ENCODE measurements at regions of chrX and their contacts with region 1.

Region 1: DNA sequence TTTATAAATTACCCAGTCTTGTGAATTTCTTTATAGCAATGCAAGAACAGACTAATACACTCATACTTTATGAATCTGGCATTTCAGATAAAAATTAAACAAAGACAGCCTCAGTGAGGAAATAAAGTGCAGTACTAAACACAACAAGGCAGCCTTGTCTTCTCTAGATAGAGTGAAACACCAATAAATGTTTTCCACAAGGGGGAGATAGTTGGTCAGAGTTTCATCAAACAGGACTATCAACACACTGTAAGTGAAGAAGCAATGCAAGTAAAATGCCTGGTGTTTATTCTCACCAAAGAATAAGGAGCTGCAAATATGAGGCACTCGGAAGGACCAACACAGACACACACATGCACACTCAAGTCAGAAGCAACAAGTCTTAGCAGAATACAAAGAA is 62.8 kb downstream of the FAM9B start:
- DNase-seq: peak in 1 of 2 donors; percentile 68
- ATAC-seq: peak in 2 of 3 donors; percentile 70
- H3K4me3 ChIP-seq: no peak overlapping the region
- H3K4me3 Mint-ChIP-seq: no peak overlapping the region
- H3K27ac ChIP-seq: no peak overlapping the region
- H3K27ac Mint-ChIP-seq: no peak overlapping the region
- H3K4me1 ChIP-seq: no peaks in the 10 kb centered on the region
- H3K4me1 Mint-ChIP-seq: peaks cover 0 to 4% of the 10 kb centered on the region in 2 donors
- H3K27me3 ChIP-seq: no peaks in the 10 kb centered on the region
- H3K27me3 Mint-ChIP-seq: peaks cover 0 to 3% of the 10 kb centered on the region in 2 donors
- CTCF ChIP-seq: peak; percentile 47

Region 2: DNA sequence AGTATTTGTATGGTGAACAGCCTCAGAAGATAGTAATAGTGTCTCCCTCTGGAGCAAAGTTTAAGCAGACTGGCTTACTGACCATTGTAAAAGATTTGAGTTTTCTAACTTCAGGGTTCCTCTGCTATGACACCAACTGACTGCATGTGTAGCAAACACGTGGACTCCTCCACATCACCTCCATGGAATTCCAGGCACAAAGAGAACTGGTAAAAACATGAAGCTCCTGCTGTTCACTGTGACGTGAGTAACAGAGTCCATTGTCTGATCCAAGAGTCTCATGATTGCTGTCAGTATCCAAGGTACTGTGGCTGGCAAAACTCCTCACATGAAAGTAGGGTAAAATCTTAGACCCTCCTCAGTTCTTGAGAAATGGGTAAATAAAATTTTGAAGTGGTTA is 170.4 kb after region 1 on chrX:
- intact Hi-C with region 1: no loop called
- DNase-seq: no peak
- ATAC-seq: no peak
- H3K4me3 ChIP-seq: no peak overlapping the region
- H3K4me3 Mint-ChIP-seq: no peak overlapping the region
- H3K27ac ChIP-seq: no peak overlapping the region
- H3K27ac Mint-ChIP-seq: no peak overlapping the region
- H3K4me1 ChIP-seq: no peaks in the 10 kb centered on the region
- H3K4me1 Mint-ChIP-seq: no peaks in the 10 kb centered on the region
- H3K27me3 ChIP-seq: no peaks in the 10 kb centered on the region
- H3K27me3 Mint-ChIP-seq: peaks cover 3 to 40% of the 10 kb centered on the region in 2 donors
- CTCF ChIP-seq: no peak

Region 3: GRCh38 chrX:9312922-9313867 is 342.1 kb after region 1 on chrX:
- intact Hi-C with region 1: loop called (anchors 5 kb)
- DNase-seq: peak; percentile 62 to 77
- ATAC-seq: peak; percentile 77 to 85 (median 85)
- H3K4me3 ChIP-seq: no peak overlapping the region
- H3K4me3 Mint-ChIP-seq: no peak overlapping the region
- H3K27ac ChIP-seq: no peak overlapping the region
- H3K27ac Mint-ChIP-seq: no peak overlapping the region
- H3K4me1 ChIP-seq: peaks cover 15% of the 10 kb centered on the region
- H3K4me1 Mint-ChIP-seq: peaks cover 11 to 18% of the 10 kb centered on the region in 2 donors
- H3K27me3 ChIP-seq: no peaks in the 10 kb centered on the region
- H3K27me3 Mint-ChIP-seq: no peaks in the 10 kb centered on the region
- CTCF ChIP-seq: peak; percentile 66

Measured in natural killer cell (primary cell).